Dendritic cell treated with granulocyte-macrophage colony-stimulating factor and Interleukin-4, amounts not matched to agents 40 ng/mL and 50 ng/mL, for 4 days (primary cell): ENCODE measurements at regions of chr20 and their contacts with region 1.

Region 1: GRCh38 chr20:40945754-40946450 is 82.7 kb upstream of the TOP1 start:
- H3K4me3 Mint-ChIP-seq: no peak overlapping the region
- H3K27ac Mint-ChIP-seq: no peak overlapping the region
- H3K4me1 Mint-ChIP-seq: peaks cover 9% of the 10 kb centered on the region
- H3K27me3 Mint-ChIP-seq: peaks cover 4% of the 10 kb centered on the region

Region 2: DNA sequence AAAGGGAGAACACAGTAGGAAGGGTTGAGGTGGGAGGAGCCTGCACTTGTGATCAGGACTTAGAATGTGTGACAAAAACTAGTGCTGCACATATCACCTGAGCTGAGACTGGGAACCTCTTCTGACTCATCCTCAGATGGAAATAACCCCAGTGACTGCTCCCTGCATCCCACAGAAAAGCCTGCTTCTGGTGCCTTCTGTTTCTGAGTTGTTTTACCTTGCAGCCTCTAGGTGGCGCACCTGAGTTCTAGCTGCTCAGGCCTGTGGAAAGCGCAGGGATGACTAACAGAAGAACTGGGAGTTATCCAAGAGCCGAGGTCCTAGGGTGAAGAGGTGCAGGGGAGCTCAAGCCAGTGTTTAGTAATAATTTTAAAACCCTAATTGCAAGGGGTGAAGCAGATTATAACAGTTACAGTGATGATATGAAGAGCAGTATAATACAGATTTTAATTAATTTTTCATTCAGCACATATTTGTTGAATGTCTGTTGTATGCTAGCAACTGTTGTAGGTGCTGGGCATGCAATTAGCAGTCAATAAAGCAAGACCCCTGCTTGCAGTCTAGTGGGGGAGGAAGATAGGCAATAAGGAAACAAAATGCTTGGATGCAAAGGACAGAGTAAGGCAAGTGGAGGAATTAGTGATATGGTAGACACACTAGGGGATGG is 1681.3 kb before region 1 on chr20:
- intact Hi-C with region 1: loop called (anchors 5 kb)
- H3K4me3 Mint-ChIP-seq: no peak overlapping the region
- H3K27ac Mint-ChIP-seq: no peak overlapping the region
- H3K4me1 Mint-ChIP-seq: no peaks in the 10 kb centered on the region
- H3K27me3 Mint-ChIP-seq: peaks cover 4% of the 10 kb centered on the region

Region 3: GRCh38 chr20:40416274-40416673 is 529.6 kb before region 1 on chr20:
- intact Hi-C with region 1: no loop called
- H3K4me3 Mint-ChIP-seq: no peak overlapping the region
- H3K27ac Mint-ChIP-seq: no peak overlapping the region
- H3K4me1 Mint-ChIP-seq: peaks cover 14% of the 10 kb centered on the region
- H3K27me3 Mint-ChIP-seq: peaks cover 12% of the 10 kb centered on the region

Region 4: DNA sequence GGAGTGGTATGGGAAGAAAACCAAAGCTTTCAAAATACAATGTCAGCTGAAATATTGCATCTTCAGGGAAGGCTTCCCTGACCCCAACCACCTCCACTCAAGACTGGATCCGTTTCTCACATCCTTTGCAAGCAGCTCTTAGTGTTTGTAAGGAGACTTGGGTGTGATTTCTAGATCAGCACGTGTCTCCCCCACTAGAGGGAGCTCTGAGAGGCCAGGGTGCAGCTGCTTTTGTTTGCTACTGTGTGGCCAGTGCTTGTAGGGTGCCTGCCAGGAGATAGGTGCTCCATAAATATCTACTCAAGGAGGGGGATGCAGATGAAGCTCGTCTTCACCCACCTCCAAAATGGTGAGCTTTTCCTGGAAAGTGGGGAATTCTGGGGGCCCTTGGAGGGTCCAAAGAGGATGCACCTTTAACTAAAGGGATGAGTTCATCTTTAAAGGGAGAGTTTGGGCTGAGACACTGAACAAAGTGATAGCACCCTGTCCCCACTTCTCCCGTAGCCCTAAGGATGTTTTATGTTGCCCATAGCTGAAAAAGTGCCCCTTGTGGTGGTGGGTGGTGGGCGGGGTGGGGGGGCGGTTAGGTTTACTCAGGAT is 204.3 kb before region 1 on chr20:
- intact Hi-C with region 1: loop called (anchors 1 kb)
- H3K4me3 Mint-ChIP-seq: no peak overlapping the region
- H3K27ac Mint-ChIP-seq: peak overlapping the region; percentile 17
- H3K4me1 Mint-ChIP-seq: peaks cover 29% of the 10 kb centered on the region
- H3K27me3 Mint-ChIP-seq: peaks cover 2% of the 10 kb centered on the region

Region 5: DNA sequence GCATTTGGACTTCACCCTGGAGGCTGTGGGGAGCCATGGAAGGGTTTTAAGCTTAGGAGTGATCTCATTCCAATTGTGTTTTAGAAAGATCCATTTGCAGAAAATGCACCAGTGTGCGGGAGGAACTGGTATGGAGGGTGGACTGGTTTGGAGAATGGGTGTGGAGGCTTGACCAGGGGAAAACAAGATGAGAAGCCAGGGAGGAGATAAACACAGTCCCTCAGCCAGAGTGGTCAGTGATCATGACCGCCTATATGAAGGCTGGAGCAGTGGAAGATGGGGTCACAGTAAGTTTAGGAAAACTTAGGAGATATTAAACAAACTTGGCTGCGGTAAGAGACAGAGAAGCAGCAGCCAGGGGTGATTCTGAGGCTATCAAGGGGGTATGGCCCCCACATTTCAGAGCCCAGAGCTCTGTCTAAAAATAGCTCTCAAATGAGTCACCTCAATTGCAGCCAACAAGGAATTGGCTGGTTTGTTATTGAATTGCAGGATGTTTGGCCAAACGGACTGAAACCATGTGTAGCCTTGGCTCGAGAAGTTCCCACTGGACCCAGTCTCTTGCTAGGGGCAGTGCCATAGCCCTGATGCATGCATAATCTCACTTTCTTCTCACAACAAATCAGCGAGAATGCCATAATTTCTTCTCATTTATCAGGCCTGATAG is 77.2 kb before region 1 on chr20:
- intact Hi-C with region 1: no loop called
- H3K4me3 Mint-ChIP-seq: no peak overlapping the region
- H3K27ac Mint-ChIP-seq: no peak overlapping the region
- H3K4me1 Mint-ChIP-seq: no peaks in the 10 kb centered on the region
- H3K27me3 Mint-ChIP-seq: no peaks in the 10 kb centered on the region